ENCODE measurements at regions of chrX and their contacts with region 1.

Region 1: DNA sequence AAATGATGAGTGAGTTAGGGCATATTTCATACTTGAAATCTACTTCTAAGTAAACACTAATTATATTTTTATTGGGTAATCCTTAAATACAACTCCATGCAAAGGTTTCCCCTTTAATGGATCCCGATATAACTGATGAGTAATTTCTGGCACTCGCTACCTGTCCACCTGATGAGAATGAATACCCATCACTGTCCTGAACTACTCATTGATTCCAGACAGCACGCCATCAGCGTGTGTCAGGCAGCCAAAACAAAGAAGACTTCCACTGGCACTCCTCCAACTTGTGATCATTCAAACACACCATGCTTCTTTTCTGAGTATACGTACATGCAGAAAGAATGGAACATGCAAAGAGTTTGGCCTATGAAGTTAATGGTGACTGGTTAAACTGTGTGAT is 69.4 kb downstream of the HCCS start:
- DNase-seq: no peak
- H3K4me3 ChIP-seq: no peak overlapping the region
- H3K27ac ChIP-seq: no peak overlapping the region
- H3K4me1 ChIP-seq: no peaks in the 10 kb centered on the region
- H3K27me3 ChIP-seq: no peaks in the 10 kb centered on the region
- CTCF ChIP-seq: no peak
- EP300 ChIP-seq: no peak
- POLR2A ChIP-seq: no peak

Region 2: DNA sequence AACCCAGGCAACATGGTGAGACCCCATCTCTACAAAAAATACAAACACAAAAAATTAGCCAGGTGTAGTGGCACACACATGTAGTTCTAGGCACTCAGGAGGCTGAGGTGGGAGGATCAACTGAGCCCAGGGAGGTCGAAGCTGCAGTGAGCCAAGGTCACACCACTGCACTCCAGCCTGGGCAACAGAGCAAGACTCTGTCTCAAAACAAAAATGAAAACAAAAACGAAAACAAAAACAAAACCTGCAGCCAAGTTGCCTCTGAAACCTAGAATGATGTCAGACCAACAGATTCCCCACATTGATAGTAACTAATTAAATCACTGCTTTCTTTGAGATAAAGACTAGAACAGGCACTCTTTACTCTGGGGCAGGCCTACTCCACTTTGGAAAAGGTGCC is 217.1 kb after region 1 on chrX:
- in situ Hi-C with region 1: no loop called
- intact Hi-C with region 1: loop called (anchors 5 kb)
- DNase-seq: no peak
- H3K4me3 ChIP-seq: no peak overlapping the region
- H3K27ac ChIP-seq: no peak overlapping the region
- H3K4me1 ChIP-seq: no peaks in the 10 kb centered on the region
- H3K27me3 ChIP-seq: no peaks in the 10 kb centered on the region
- CTCF ChIP-seq: no peak
- EP300 ChIP-seq: no peak
- POLR2A ChIP-seq: no peak